ENCODE measurements at regions of chr1 and their contacts with region 1.

Region 1: GRCh38 chr1:42576935-42577334 is 81.3 kb upstream of the PPIH start:
- DNase-seq: no peak
- ATAC-seq: no peak
- H3K4me3 ChIP-seq: no peak overlapping the region
- H3K4me3 Mint-ChIP-seq: no peak overlapping the region
- H3K27ac ChIP-seq: no peak overlapping the region
- H3K27ac Mint-ChIP-seq: no peak overlapping the region
- H3K4me1 ChIP-seq: no peaks in the 10 kb centered on the region
- H3K4me1 Mint-ChIP-seq: no peaks in the 10 kb centered on the region
- H3K27me3 ChIP-seq: no peaks in the 10 kb centered on the region
- H3K27me3 Mint-ChIP-seq: no peaks in the 10 kb centered on the region
- CTCF ChIP-seq: no peak

Region 2: GRCh38 chr1:42529724-42530181 is 47.2 kb before region 1 on chr1:
- CTCF ChIA-PET with region 1: no interaction called
- POLR2A ChIA-PET with region 1: no interaction called
- intact Hi-C with region 1: no loop called
- DNase-seq: peak in 4 of 14 experiments; percentile 16 to 60 (median 40)
- ATAC-seq: no peak
- H3K4me3 ChIP-seq: peak overlapping the region; percentile 54
- H3K4me3 Mint-ChIP-seq: peak overlapping the region; percentile 87
- H3K27ac ChIP-seq: no peak overlapping the region
- H3K27ac Mint-ChIP-seq: peak overlapping the region; percentile 65
- H3K4me1 ChIP-seq: peaks cover 5% of the 10 kb centered on the region
- H3K4me1 Mint-ChIP-seq: peaks cover 9% of the 10 kb centered on the region
- H3K27me3 ChIP-seq: no peaks in the 10 kb centered on the region
- H3K27me3 Mint-ChIP-seq: no peaks in the 10 kb centered on the region
- CTCF ChIP-seq: no peak

Region 3: GRCh38 chr1:42646056-42646455 is 69.1 kb after region 1 on chr1:
- CTCF ChIA-PET with region 1: no interaction called
- POLR2A ChIA-PET with region 1: no interaction called
- intact Hi-C with region 1: no loop called
- DNase-seq: no peak
- ATAC-seq: no peak
- H3K4me3 ChIP-seq: no peak overlapping the region
- H3K4me3 Mint-ChIP-seq: no peak overlapping the region
- H3K27ac ChIP-seq: no peak overlapping the region
- H3K27ac Mint-ChIP-seq: no peak overlapping the region
- H3K4me1 ChIP-seq: no peaks in the 10 kb centered on the region
- H3K4me1 Mint-ChIP-seq: no peaks in the 10 kb centered on the region
- H3K27me3 ChIP-seq: no peaks in the 10 kb centered on the region
- H3K27me3 Mint-ChIP-seq: no peaks in the 10 kb centered on the region
- CTCF ChIP-seq: no peak

Region 4: DNA sequence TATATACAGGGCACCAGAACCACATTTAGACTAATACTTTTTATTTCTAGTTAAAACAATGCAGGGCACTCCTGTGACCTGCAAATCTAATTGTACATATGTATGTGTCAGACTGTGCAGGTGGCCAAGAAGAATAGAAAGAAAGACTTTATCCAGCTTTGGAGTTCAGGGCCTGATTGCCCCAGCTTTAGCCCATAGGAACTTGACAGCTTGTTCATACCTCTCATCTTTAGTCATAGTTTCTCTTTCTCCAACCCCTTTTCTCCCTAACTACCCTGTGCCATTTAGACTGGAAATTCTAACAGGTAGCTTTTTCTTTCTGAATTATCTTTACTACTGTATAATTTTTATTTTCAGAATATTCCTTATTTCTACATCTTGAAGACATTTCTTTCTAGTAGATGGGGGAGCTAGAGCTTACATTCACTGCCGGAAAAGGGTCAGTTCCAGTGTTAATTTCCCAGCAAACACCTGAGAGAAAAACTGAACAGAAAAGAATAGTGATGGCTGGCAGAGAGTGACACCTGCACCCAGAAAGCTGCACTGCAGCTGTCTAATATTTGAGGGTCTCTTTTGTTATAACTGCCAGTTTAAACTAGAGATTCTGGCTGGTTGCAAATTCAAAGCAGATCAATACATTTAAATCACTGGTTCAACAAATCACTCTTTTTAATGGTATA is 113.7 kb after region 1 on chr1:
- CTCF ChIA-PET with region 1: no interaction called
- POLR2A ChIA-PET with region 1: no interaction called
- intact Hi-C with region 1: loop called in 1 of 2 experiments (anchors 1 kb)
- DNase-seq: peak in 1 of 14 experiments; percentile 14
- ATAC-seq: peak; percentile 44
- H3K4me3 ChIP-seq: no peak overlapping the region
- H3K4me3 Mint-ChIP-seq: no peak overlapping the region
- H3K27ac ChIP-seq: no peak overlapping the region
- H3K27ac Mint-ChIP-seq: peak overlapping the region; percentile 52
- H3K4me1 ChIP-seq: peaks cover 41% of the 10 kb centered on the region
- H3K4me1 Mint-ChIP-seq: peaks cover 97% of the 10 kb centered on the region
- H3K27me3 ChIP-seq: no peaks in the 10 kb centered on the region
- H3K27me3 Mint-ChIP-seq: no peaks in the 10 kb centered on the region
- CTCF ChIP-seq: peak; percentile 12

Region 5: DNA sequence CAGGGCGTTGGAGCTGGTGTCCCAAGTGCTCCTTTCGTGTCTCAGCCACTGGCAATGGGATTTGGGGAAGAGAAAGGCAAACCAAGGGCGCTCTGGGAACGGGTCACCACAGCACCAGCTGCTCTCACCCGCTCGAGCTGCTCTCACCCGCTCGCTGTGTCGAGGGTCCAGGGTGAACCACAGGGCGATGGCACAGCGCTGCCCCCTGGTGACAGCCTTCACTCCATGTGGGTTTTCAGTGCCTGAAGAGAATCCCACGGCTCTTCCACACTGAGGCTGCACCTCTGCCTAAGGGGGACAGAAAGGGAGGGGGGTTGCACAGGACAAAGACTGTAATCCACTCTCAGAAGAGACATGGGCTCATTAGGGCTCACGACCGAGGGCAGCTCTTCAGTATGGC is 170.2 kb after region 1 on chr1:
- CTCF ChIA-PET with region 1: interaction called, 6 read pairs
- POLR2A ChIA-PET with region 1: no interaction called
- intact Hi-C with region 1: loop called (anchors 1 kb)
- DNase-seq: peak in 13 of 14 experiments; percentile 15 to 68 (median 41)
- ATAC-seq: peak; percentile 48
- H3K4me3 ChIP-seq: no peak overlapping the region
- H3K4me3 Mint-ChIP-seq: no peak overlapping the region
- H3K27ac ChIP-seq: no peak overlapping the region
- H3K27ac Mint-ChIP-seq: no peak overlapping the region
- H3K4me1 ChIP-seq: no peaks in the 10 kb centered on the region
- H3K4me1 Mint-ChIP-seq: no peaks in the 10 kb centered on the region
- H3K27me3 ChIP-seq: no peaks in the 10 kb centered on the region
- H3K27me3 Mint-ChIP-seq: no peaks in the 10 kb centered on the region
- CTCF ChIP-seq: peak; percentile 69

Region 6: GRCh38 chr1:43073490-43074230 is 496.7 kb after region 1 on chr1:
- CTCF ChIA-PET with region 1: interaction called, 6 read pairs
- POLR2A ChIA-PET with region 1: no interaction called
- intact Hi-C with region 1: loop called (anchors 2 to 5 kb)
- DNase-seq: peak; percentile 60 to 87 (median 68)
- ATAC-seq: peak; percentile 84
- H3K4me3 ChIP-seq: no peak overlapping the region
- H3K4me3 Mint-ChIP-seq: no peak overlapping the region
- H3K27ac ChIP-seq: no peak overlapping the region
- H3K27ac Mint-ChIP-seq: no peak overlapping the region
- H3K4me1 ChIP-seq: peaks cover 6% of the 10 kb centered on the region
- H3K4me1 Mint-ChIP-seq: peaks cover 15% of the 10 kb centered on the region
- H3K27me3 ChIP-seq: no peaks in the 10 kb centered on the region
- H3K27me3 Mint-ChIP-seq: no peaks in the 10 kb centered on the region
- CTCF ChIP-seq: peak; percentile 82

Measured in CD4-positive, alpha-beta T cell (primary cell).